Sigmoid colon (tissue), 7 donors: ENCODE measurements at regions of chr2 and their contacts with region 1.

Region 1: GRCh38 chr2:128232965-128233789 is 85.5 kb downstream of the HS6ST1 start:
- DNase-seq: peak; percentile 92
- H3K4me3 ChIP-seq: peak overlapping the region; percentile 49 to 84 (median 74)
- H3K27ac ChIP-seq: peak overlapping the region; percentile 70 to 84 (median 80)
- H3K4me1 ChIP-seq: peaks cover 0 to 31% (median 24%) of the 10 kb centered on the region in 4 donors
- H3K27me3 ChIP-seq: no peaks in the 10 kb centered on the region
- CTCF ChIP-seq: peak; percentile 64 to 95 (median 80)
- EP300 ChIP-seq: no peak
- POLR2A ChIP-seq: no peak

Region 2: GRCh38 chr2:126945118-126945517 is 1288.1 kb before region 1 on chr2:
- intact Hi-C with region 1: no loop called
- DNase-seq: no peak
- H3K4me3 ChIP-seq: no peak overlapping the region
- H3K27ac ChIP-seq: no peak overlapping the region
- H3K4me1 ChIP-seq: no peaks in the 10 kb centered on the region
- H3K27me3 ChIP-seq: no peaks in the 10 kb centered on the region
- CTCF ChIP-seq: no peak
- EP300 ChIP-seq: no peak
- POLR2A ChIP-seq: no peak

Region 3: DNA sequence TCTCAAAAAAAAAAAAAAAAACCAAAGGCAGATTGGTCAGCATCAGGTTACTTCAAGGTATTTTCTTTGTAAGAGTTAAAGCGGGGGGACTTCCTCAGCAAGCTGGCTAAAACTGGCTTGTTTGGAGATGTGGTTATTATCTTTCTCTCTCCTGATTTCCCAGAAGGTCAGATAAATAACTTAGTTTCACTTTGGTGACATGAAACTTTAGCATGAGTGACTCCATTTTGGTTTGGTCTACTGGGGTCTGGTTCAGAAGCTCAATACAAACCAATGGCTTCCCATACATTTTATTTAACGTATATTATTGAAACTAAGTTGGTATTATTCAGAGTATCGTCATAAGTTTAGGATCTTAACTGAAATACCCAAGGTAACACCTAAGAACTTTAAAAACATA is 305.8 kb before region 1 on chr2:
- intact Hi-C with region 1: no loop called
- DNase-seq: no peak
- H3K4me3 ChIP-seq: no peak overlapping the region
- H3K27ac ChIP-seq: no peak overlapping the region
- H3K4me1 ChIP-seq: no peaks in the 10 kb centered on the region
- H3K27me3 ChIP-seq: no peaks in the 10 kb centered on the region
- CTCF ChIP-seq: no peak
- EP300 ChIP-seq: no peak
- POLR2A ChIP-seq: no peak

Region 4: DNA sequence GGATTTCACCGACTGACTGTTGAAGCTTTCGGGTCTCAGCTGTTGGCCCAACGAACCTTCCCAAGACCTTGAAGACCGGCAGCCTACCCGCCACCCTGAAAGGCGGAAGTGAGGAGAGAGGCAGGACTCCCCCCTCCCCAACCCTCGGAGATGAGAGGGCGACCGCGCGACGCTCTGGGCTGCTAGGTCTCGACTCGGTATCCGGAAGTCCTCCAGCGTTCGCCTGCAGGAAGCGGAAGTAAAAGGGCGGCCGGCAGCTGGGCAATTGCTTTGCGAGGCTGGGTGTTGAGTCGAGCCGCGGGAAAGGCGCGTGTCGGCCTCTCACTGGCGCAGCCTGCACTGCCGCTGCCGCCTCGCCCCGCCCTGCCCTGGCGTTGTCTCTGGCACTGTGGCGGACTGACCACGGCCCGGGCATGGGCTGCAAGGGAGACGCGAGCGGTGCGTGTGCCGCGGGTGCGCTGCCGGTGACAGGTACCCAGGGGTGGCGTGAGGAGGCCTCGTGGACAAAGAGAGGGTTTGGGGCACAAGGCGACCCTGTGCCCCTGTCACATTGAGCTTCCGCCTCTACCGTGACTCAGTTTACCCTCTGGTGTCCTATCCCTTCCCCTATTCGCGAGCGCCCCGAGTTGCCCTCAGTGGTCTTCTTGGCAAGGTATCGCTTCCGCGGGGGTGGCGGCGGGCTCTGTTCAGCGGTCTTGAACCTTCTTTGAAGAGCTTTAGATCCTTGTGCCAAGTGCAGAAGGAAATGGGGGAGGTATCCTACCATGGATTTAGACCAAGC is 142.0 kb before region 1 on chr2 and contains the start of gene UGGT1:
- intact Hi-C with region 1: loop called (anchors 10 kb)
- DNase-seq: peak; percentile 96
- H3K4me3 ChIP-seq: peak within 1 kb of the TSS; percentile 83 to 98 (median 96)
- H3K27ac ChIP-seq: peak within 1 kb of the TSS; percentile 86 to 93 (median 87)
- H3K4me1 ChIP-seq: peaks cover 0 to 32% (median 16%) of the 10 kb centered on the region in 4 donors
- H3K27me3 ChIP-seq: no peaks in the 10 kb centered on the region
- CTCF ChIP-seq: no peak
- EP300 ChIP-seq: peak in 1 of 4 donors; percentile 7
- POLR2A ChIP-seq: peak; percentile 90 to 94
- total RNA-seq, gene UGGT1: 19.8 to 47.9 (median 28.2) TPM

Region 5: GRCh38 chr2:128178650-128179460 is 54.3 kb before region 1 on chr2:
- intact Hi-C with region 1: loop called (anchors 2 kb)
- DNase-seq: peak; percentile 80
- H3K4me3 ChIP-seq: no peak overlapping the region
- H3K27ac ChIP-seq: peak overlapping the region in 3 of 4 donors; percentile 76 to 84 (median 81)
- H3K4me1 ChIP-seq: peaks cover 0 to 36% (median 21%) of the 10 kb centered on the region in 4 donors
- H3K27me3 ChIP-seq: no peaks in the 10 kb centered on the region
- CTCF ChIP-seq: peak; percentile 40 to 88 (median 73)
- EP300 ChIP-seq: peak; percentile 74 to 97 (median 90)
- POLR2A ChIP-seq: no peak

Region 6: GRCh38 chr2:128196471-128196931 is 36.7 kb before region 1 on chr2:
- intact Hi-C with region 1: loop called (anchors 5 kb)
- DNase-seq: peak; percentile 68
- H3K4me3 ChIP-seq: peak overlapping the region in 2 of 4 donors; percentile 8 to 9
- H3K27ac ChIP-seq: peak overlapping the region; percentile 30 to 73 (median 63)
- H3K4me1 ChIP-seq: peaks cover 0 to 23% (median 18%) of the 10 kb centered on the region in 4 donors
- H3K27me3 ChIP-seq: no peaks in the 10 kb centered on the region
- CTCF ChIP-seq: no peak
- EP300 ChIP-seq: no peak
- POLR2A ChIP-seq: no peak

Region 7: DNA sequence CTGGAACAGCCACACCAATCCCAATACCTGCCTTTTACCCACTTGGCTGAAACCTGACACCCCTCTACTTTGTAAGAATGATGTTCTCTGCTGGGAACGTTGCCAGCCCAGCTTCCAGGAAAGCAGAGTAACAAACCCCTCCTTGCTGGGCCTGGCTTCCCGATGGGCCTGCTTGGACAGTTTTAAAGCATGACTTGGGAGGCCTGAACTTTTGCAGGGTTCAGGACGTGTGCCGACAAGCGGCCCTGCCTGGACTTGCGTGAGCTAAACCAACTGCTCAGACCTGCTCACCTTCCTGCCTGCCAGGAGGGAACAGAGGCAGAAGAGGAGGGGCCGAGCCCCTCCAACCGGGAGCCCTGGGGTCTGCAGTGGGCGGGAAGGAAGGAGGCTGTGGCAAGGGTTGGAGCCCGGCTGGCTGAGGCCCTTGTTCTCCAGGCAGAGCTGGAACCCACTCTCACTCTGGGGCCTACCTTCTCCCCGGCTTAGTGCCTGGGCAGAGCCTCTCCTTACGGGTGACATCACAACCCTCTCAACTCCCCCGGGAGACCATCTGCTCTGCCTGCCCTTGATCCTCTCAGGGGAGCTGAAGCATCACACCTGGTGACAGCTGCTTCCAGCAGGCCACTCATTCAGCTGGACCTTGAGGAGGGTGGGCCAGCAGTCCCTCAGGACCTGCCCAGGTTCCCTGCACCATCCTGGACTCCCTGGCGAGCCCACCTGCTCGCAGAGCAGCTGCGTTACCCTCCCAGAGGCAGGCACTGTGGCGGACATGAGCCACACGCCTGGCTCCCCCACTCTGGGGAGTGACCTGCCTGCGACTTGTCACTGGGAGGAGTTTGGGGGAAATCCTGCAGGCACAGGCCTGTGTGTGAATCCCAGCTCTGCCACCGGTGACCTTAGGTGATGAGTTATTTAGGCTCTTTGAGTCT is 72.2 kb after region 1 on chr2:
- intact Hi-C with region 1: loop called (anchors 5 kb)
- DNase-seq: peak; percentile 96
- H3K4me3 ChIP-seq: peak overlapping the region in 3 of 4 donors; percentile 9 to 24 (median 11)
- H3K27ac ChIP-seq: peak overlapping the region; percentile 70 to 93 (median 84)
- H3K4me1 ChIP-seq: peaks cover 0 to 99% (median 89%) of the 10 kb centered on the region in 4 donors
- H3K27me3 ChIP-seq: no peaks in the 10 kb centered on the region
- CTCF ChIP-seq: no peak
- EP300 ChIP-seq: peak in 3 of 4 donors; percentile 4 to 91 (median 85)
- POLR2A ChIP-seq: no peak

Region 8: GRCh38 chr2:128321784-128322714 is 88.9 kb after region 1 on chr2:
- intact Hi-C with region 1: loop called (anchors 5 kb)
- DNase-seq: peak; percentile 93
- H3K4me3 ChIP-seq: peak overlapping the region; percentile 34 to 81 (median 54)
- H3K27ac ChIP-seq: peak overlapping the region; percentile 56 to 89 (median 83)
- H3K4me1 ChIP-seq: peaks cover 0 to 52% (median 38%) of the 10 kb centered on the region in 4 donors
- H3K27me3 ChIP-seq: no peaks in the 10 kb centered on the region
- CTCF ChIP-seq: peak in 3 of 4 experiments; percentile 6 to 95 (median 52)
- EP300 ChIP-seq: no peak
- POLR2A ChIP-seq: no peak